ENCODE measurements at regions of chr17 and their contacts with region 1.

Region 1: GRCh38 chr17:48944519-48945260 is at the start of gene SNF8:
- DNase-seq: peak; percentile 93
- H3K4me3 Mint-ChIP-seq: peak within 1 kb of the TSS; percentile 100
- H3K27ac Mint-ChIP-seq: peak within 1 kb of the TSS; percentile 97
- H3K4me1 Mint-ChIP-seq: peaks cover 15% of the 10 kb centered on the region
- H3K27me3 Mint-ChIP-seq: no peaks in the 10 kb centered on the region
- total RNA-seq, gene SNF8: 148 and 163 TPM in 2 replicates

Region 2: DNA sequence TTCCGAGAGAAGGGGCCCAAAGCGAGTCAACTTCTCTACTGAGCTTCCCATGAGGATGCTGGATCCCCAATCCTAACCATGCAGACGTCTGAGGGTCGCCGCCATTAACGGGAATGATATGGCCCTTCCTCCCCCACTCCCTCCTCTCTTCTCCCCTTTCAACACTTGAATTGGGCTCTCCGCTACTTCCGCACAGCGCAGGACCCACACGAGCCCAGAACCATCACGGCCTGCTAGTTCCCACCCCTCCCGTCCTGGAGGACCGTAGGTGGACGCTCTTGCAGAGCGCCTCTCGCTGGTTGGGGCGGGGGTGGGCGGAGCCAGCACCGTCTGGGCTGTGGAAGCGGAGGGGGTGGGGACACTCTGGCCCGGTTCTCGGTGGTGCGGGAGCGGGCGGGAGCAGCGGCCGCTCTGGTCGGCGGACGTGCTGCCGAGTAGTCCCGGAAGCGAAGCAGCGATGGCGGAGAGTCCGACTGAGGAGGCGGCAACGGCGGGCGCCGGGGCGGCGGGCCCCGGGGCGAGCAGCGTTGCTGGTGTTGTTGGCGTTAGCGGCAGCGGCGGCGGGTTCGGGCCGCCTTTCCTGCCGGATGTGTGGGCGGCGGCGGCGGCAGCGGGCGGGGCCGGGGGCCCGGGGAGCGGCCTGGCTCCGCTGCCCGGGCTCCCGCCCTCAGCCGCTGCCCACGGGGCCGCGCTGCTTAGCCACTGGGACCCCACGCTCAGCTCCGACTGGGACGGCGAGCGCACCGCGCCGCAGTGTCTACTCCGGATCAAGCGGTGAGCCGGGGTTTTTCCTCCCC is 36.4 kb before region 1 on chr17 and contains the start of gene UBE2Z:
- intact Hi-C with region 1: loop called (anchors 1 kb)
- DNase-seq: peak; percentile 81
- H3K4me3 Mint-ChIP-seq: peak within 1 kb of the TSS; percentile 93
- H3K27ac Mint-ChIP-seq: peak within 1 kb of the TSS; percentile 97
- H3K4me1 Mint-ChIP-seq: peaks cover 43% of the 10 kb centered on the region
- H3K27me3 Mint-ChIP-seq: no peaks in the 10 kb centered on the region
- total RNA-seq, gene UBE2Z: 88.8 and 91.5 TPM in 2 replicates

Region 3: DNA sequence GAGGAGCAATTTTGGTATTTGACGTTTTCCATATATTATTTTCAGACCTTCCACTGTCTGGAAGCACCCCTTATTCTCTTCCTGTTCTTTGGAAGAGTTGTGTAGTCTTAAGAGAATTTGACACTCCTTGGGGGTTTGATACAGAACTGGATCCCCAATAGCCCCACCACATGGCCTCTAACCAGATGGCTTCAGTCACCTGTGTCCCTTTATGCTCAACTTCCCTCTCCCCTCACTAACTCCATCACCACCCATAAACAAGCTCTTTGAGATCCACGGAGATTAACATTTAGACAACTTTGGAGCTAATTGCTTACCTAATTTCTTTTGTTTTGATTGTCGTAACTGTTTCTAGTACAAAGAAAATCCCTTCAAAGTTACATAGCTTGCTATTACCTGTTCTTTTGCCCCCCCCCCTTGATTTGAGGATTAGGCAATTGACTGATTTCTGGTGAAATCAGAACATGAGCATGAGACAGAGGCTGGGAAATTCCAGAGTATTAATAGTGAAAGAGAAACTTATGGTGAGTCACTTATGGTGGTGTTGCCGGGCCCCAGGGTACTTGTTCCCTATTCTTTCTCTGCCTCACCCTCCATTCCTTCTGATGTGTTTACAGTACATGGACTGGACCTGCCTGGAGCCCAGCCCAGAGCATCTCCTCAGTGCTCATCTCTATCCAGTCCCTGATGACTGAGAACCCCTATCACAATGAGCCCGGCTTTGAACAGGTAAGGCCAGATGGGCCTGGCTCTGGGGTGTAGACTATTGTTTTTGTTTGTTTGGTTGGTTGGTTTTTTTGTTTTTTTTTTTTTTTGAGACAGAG is 29.0 kb before region 1 on chr17:
- intact Hi-C with region 1: loop called (anchors 1 kb)
- DNase-seq: peak; percentile 68
- H3K4me3 Mint-ChIP-seq: peak overlapping the region; percentile 70
- H3K27ac Mint-ChIP-seq: peak overlapping the region; percentile 88
- H3K4me1 Mint-ChIP-seq: peaks cover 55% of the 10 kb centered on the region
- H3K27me3 Mint-ChIP-seq: no peaks in the 10 kb centered on the region